AG04450 (cell line): ENCODE measurements at regions of chr14 and their contacts with region 1.

Region 1: DNA sequence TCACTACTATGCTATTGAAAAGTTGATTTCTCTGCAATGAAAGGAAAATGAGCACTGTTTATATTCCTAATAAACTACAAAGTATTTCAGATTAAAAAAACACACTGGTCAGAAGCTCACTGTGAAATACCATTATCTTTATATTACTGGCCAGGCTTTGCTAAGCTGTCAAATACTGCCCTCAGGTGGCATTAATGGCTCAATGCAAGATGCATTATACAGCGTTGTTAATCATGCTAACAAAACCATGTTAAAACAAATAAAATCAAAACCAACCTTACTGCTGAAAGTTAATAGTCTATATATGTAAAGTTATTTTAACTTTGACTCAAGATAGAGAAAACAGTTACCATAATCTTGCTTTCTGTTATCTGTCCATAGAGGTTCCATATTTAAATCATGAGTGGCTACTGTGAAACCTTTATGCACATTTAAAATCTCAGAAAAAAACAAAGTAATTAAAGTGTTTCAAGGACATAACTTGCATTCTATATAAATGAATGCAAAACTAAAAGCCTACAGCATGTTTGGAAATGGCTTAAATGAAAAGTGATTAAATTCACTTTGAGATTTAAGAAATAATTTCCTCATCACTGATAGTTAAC is 121.7 kb downstream of the RALGAPA1 start:
- DNase-seq: peak; percentile 27
- H3K4me3 ChIP-seq: no peak overlapping the region
- H3K27ac ChIP-seq: no peak overlapping the region
- H3K27me3 ChIP-seq: no peaks in the 10 kb centered on the region
- CTCF ChIP-seq: peak; percentile 89

Region 2: DNA sequence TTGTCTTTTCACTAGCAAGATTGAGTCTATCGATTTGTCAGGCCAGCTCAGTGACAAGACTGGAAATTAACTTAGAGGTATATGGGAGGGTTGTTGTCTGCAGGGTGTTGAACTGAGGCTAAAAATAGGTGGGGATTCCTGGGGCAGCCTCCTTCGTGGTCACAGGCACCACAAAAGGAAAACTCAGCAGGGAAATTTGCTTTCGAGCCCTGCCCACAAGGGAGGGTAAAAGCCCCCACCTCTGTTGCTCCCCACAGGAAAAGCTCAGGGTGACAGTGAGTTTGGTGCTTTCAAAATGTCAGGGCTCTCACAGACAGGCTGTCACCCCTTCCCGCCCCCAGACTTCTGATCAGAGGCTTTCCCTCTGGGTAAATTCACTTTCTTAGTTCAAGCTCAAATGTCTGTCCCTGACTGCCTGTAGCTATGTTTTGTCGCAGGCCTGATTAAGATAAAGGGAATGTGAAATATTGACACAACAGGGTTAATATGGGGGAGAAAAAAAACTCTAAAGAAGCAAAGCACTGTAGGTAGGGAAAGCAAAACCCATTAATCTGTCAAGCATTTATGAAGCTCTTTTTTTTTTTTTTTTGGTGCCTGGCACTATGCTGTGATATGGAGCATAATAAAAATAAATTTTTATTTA is 271.2 kb before region 1 on chr14:
- CTCF ChIA-PET with region 1: interaction called, 15 read pairs
- POLR2A ChIA-PET with region 1: no interaction called
- DNase-seq: no peak
- H3K4me3 ChIP-seq: no peak overlapping the region
- H3K27ac ChIP-seq: no peak overlapping the region
- H3K27me3 ChIP-seq: no peaks in the 10 kb centered on the region
- CTCF ChIP-seq: no peak

Region 3: GRCh38 chr14:35814371-35815005 is 127.1 kb after region 1 on chr14:
- CTCF ChIA-PET with region 1: interaction called, 10 read pairs
- POLR2A ChIA-PET with region 1: no interaction called
- DNase-seq: no peak
- H3K4me3 ChIP-seq: no peak overlapping the region
- H3K27ac ChIP-seq: no peak overlapping the region
- H3K27me3 ChIP-seq: peaks cover 4% of the 10 kb centered on the region
- CTCF ChIP-seq: peak; percentile 83

Region 4: DNA sequence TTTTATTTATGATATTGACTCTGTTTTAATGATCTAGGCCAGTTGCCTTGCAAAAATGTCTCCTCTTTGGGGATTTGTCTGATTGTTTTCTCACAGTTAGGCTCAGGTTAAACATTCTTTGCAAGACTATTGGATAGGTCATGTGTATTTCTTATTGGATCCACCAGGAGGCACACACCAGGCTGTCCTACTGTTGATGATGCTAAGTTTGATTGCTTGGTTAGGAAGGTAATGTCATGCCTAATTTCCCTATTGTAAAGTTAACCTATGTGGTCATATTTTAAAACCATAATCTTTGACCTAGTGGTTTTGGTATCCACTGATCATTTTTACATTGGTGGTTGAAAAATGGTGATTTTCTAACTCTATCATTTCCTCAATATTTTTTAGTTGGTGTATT is 275.8 kb after region 1 on chr14:
- CTCF ChIA-PET with region 1: no interaction called
- POLR2A ChIA-PET with region 1: no interaction called
- DNase-seq: no peak
- H3K4me3 ChIP-seq: no peak overlapping the region
- H3K27ac ChIP-seq: no peak overlapping the region
- H3K27me3 ChIP-seq: no peaks in the 10 kb centered on the region
- CTCF ChIP-seq: no peak